ENCODE measurements at regions of chr2 and their contacts with region 1.

Region 1: DNA sequence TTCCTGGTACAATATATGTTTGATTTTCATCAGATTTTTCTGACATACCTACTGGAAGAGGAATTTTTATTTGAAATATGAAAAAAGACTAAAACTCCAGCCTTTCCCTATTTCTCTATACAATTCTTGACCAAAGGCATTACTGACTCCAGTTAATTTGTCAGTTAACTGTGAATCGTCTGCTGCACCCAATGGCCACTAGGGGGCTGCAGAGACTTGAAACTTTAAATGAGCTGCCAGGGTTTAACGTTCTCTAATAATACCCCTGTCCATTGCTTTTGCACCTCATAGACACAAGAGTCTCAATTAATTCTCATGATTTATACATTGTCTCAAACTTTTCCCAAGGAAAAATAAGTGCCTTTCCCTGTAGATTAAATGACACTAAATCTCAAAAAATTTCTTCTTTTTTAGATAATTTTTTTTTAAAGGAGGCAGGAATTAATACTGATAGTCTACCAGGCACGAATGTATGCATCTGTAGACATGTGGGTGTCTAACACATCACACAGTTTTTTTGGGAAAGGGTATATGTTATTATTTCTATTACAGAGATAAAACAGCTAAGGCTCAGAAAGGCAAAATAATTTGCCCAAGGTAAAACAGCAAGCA is 1.8 kb upstream of the ALK start:
- DNase-seq: peak in 2 of 3 donors; percentile 43 to 63
- ATAC-seq: peak; percentile 64 to 72 (median 69)
- H3K4me3 ChIP-seq: no peak overlapping the region
- H3K27ac ChIP-seq: no peak overlapping the region
- H3K4me1 ChIP-seq: peaks cover 0 to 17% (median 3%) of the 10 kb centered on the region in 4 donors
- H3K27me3 ChIP-seq: peaks cover 7 to 39% of the 10 kb centered on the region in 2 donors
- CTCF ChIP-seq: peak; percentile 82 to 97 (median 96)
- POLR2A ChIP-seq: no peak

Region 2: GRCh38 chr2:29796446-29796845 is 126.8 kb before region 1 on chr2:
- intact Hi-C with region 1: no loop called
- DNase-seq: no peak
- ATAC-seq: no peak
- H3K4me3 ChIP-seq: no peak overlapping the region
- H3K27ac ChIP-seq: no peak overlapping the region
- H3K4me1 ChIP-seq: no peaks in the 10 kb centered on the region
- H3K27me3 ChIP-seq: no peaks in the 10 kb centered on the region
- CTCF ChIP-seq: no peak
- POLR2A ChIP-seq: no peak

Region 3: GRCh38 chr2:29834624-29835023 is 88.6 kb before region 1 on chr2:
- intact Hi-C with region 1: no loop called
- DNase-seq: no peak
- ATAC-seq: no peak
- H3K4me3 ChIP-seq: no peak overlapping the region
- H3K27ac ChIP-seq: no peak overlapping the region
- H3K4me1 ChIP-seq: no peaks in the 10 kb centered on the region
- H3K27me3 ChIP-seq: no peaks in the 10 kb centered on the region
- CTCF ChIP-seq: no peak
- POLR2A ChIP-seq: no peak

Region 4: GRCh38 chr2:30072250-30072842 is 149.1 kb after region 1 on chr2:
- intact Hi-C with region 1: loop called in 1 of 2 experiments (anchors 5 kb)
- DNase-seq: peak; percentile 37 to 71 (median 60)
- ATAC-seq: peak; percentile 93 to 97 (median 96)
- H3K4me3 ChIP-seq: no peak overlapping the region
- H3K27ac ChIP-seq: no peak overlapping the region
- H3K4me1 ChIP-seq: no peaks in the 10 kb centered on the region
- H3K27me3 ChIP-seq: no peaks in the 10 kb centered on the region
- CTCF ChIP-seq: peak; percentile 62 to 77 (median 72)
- POLR2A ChIP-seq: no peak

Measured in right lobe of liver (tissue), 6 donors.